ENCODE measurements at regions of chr21 and their contacts with region 1.

Region 1: DNA sequence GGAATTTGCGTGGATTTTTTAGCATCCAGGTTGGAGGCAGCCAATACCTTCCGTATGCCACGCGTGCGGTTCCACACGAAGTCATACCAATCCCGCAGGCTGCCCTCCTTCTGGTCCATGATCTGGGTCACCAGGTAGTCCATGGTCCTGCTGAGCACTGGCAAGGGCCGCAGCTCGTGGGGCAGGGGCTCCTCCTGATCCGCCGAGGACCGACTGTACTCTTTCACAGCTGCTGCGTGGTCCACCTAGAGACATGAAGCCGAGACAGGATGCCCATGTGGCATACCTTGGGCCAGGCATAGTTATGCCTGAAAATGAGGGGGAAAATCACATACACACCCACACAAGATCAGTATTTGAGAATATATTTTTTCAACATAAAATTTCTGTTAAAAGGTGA is 12.1 kb downstream of the MCM3AP start:
- DNase-seq: no peak
- ATAC-seq: no peak
- H3K4me3 ChIP-seq: no peak overlapping the region
- H3K27ac ChIP-seq: no peak overlapping the region
- H3K4me1 ChIP-seq: no peaks in the 10 kb centered on the region
- H3K27me3 ChIP-seq: no peaks in the 10 kb centered on the region
- CTCF ChIP-seq: no peak

Region 2: GRCh38 chr21:46191257-46191685 is 82.1 kb before region 1 on chr21:
- intact Hi-C with region 1: loop called in 1 of 10 experiments (anchors 10 kb)
- DNase-seq: no peak
- ATAC-seq: peak in 1 of 8 donors; percentile 44
- H3K4me3 ChIP-seq: no peak overlapping the region
- H3K27ac ChIP-seq: peak overlapping the region in 6 of 10 donors; percentile 23 to 96 (median 82)
- H3K4me1 ChIP-seq: peaks cover 15 to 38% (median 24%) of the 10 kb centered on the region in 9 donors
- H3K27me3 ChIP-seq: no peaks in the 10 kb centered on the region
- CTCF ChIP-seq: no peak

Region 3: DNA sequence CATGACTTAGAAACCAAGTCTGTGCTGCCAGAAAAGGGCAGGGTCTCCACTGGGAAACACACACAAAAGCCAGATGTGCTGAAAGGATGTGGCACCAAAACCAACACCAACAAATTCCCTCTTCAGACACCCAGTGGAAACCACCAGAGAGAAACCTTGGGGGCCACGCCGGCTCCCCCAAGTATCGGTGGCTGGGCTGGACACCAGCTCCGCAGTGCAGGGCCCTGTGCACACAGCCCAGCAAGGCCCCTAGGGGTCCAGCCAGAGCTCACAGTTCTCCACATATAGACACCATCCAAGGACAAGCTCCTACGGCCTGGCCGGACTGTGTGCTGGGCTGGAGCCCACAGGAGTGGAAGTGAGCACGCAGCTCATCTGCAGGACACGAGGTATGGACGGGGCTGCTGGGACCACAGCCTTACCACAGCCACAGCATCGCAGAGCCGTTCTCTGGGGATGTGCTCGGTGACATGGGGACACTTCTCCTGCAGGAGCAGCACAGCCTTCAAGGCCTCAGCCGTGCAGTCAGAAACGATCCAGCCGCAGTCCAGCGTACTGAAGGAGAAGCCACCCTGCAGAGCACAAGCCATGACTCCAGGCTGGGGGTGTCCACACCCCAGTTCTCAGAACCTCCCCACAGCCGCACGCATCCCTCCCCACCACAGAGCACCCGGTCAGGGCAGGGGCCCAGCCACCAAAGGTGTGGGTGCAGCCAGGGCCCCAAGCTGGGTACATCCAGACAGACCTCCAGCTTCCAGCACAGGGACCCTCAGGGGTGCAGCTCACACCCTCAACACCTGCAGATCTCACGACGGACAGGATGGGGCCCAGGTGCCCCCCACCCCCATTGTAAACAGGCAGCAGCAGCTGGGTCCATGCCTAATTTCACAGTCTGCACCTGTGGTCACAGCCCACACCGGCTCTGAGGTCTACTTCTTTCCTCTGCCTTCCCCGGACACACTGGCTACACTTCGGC is 66.0 kb before region 1 on chr21:
- intact Hi-C with region 1: no loop called
- DNase-seq: no peak
- ATAC-seq: peak in 1 of 8 donors; percentile 32
- H3K4me3 ChIP-seq: no peak overlapping the region
- H3K27ac ChIP-seq: no peak overlapping the region
- H3K4me1 ChIP-seq: peaks cover 0 to 8% (median 0%) of the 10 kb centered on the region in 9 donors
- H3K27me3 ChIP-seq: no peaks in the 10 kb centered on the region
- CTCF ChIP-seq: no peak

Region 4: GRCh38 chr21:46334351-46335140 is 61.2 kb after region 1 on chr21:
- intact Hi-C with region 1: no loop called
- DNase-seq: no peak
- ATAC-seq: no peak
- H3K4me3 ChIP-seq: no peak overlapping the region
- H3K27ac ChIP-seq: no peak overlapping the region
- H3K4me1 ChIP-seq: no peaks in the 10 kb centered on the region
- H3K27me3 ChIP-seq: no peaks in the 10 kb centered on the region
- CTCF ChIP-seq: no peak